OCI-LY7 (cell line): ENCODE measurements at regions of chr19 and their contacts with region 1.

Region 1: GRCh38 chr19:41449079-41449864 is 6.3 kb downstream of the ERICH4 start:
- DNase-seq: peak; percentile 71
- H3K4me3 ChIP-seq: peak overlapping the region; percentile 42
- H3K27ac ChIP-seq: no peak overlapping the region
- H3K4me1 ChIP-seq: peaks cover 23% of the 10 kb centered on the region
- CTCF ChIP-seq: peak; percentile 99

Region 2: DNA sequence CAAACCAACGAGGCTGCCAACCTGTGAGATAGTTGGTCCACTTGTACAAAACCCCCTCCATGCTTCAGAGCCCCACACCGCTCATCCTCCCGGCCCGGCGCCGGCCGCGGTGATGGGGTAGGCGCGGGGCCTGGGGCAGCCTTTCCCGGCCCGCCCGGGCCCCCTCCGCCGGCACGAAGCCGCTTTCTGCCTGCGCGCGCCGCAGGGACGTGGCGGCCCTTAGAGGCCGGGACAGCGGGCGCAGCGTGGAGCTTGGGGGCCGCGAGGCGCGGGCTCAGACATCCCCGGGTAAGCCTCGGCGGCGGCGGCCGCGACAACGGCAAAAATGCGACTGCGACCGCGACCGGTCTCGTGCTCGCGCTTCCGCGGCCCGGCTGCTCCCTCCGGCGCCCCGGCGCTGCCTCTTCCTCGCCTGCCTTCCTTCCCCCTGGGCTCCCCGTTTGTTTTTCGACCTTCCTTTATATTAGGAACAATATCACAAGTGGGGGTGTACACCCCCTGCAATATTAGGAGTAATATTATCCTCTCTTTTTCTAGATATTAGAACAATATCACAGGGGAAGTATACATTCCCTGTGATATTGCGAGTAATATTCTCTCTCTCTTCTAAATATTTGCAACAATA is 72.8 kb after region 1 on chr19:
- CTCF ChIA-PET with region 1: no interaction called
- POLR2A ChIA-PET with region 1: no interaction called
- intact Hi-C with region 1: loop called (anchors 2 kb)
- DNase-seq: no peak
- H3K4me3 ChIP-seq: peak overlapping the region; percentile 46
- H3K27ac ChIP-seq: no peak overlapping the region
- H3K4me1 ChIP-seq: peaks cover 28% of the 10 kb centered on the region
- CTCF ChIP-seq: no peak

Region 3: GRCh38 chr19:41541990-41542584 is 92.8 kb after region 1 on chr19:
- CTCF ChIA-PET with region 1: no interaction called
- POLR2A ChIA-PET with region 1: no interaction called
- intact Hi-C with region 1: loop called (anchors 1 kb)
- DNase-seq: peak; percentile 81
- H3K4me3 ChIP-seq: no peak overlapping the region
- H3K27ac ChIP-seq: no peak overlapping the region
- H3K4me1 ChIP-seq: peaks cover 64% of the 10 kb centered on the region
- CTCF ChIP-seq: peak; percentile 90

Region 4: DNA sequence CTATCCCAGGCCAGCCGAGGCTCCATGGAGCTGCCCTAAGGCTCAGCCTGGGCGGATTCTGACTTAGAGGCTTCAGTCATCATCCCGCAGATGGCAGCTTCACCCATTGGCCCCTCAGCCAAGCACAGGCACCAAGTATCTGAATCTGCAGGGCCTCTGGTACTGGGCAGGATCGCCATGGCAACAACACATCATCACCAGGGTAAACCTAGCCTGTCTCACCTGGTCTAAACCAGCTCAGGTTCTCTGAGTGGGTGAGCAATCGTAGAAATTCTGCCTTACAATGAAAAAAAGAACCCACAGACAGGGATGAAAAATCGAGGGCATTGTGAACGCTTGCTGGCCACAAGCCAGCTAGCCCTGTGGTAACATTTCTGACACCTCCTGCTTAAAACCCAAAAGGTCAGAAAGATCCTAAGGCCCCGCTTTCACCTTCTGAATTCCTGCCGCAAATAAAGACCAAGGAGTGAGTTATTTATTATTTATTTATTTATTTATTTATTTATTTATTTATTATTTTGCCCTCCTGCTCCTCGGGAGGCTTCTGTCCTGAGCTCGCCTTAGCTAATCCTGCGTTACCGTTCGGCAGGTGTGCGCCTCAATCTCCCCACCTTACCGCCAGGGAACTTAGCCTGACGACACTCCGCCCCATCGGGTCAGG is 114.7 kb after region 1 on chr19:
- CTCF ChIA-PET with region 1: interaction called, 5 read pairs
- POLR2A ChIA-PET with region 1: interaction called, 4 read pairs
- intact Hi-C with region 1: loop called (anchors 1 kb)
- DNase-seq: no peak
- H3K4me3 ChIP-seq: no peak overlapping the region
- H3K27ac ChIP-seq: no peak overlapping the region
- H3K4me1 ChIP-seq: peaks cover 37% of the 10 kb centered on the region
- CTCF ChIP-seq: no peak

Region 5: GRCh38 chr19:41570639-41571112 is 121.4 kb after region 1 on chr19:
- CTCF ChIA-PET with region 1: no interaction called
- POLR2A ChIA-PET with region 1: interaction called, 4 read pairs
- intact Hi-C with region 1: loop called (anchors 2 kb)
- DNase-seq: peak; percentile 87
- H3K4me3 ChIP-seq: no peak overlapping the region
- H3K27ac ChIP-seq: no peak overlapping the region
- H3K4me1 ChIP-seq: peaks cover 8% of the 10 kb centered on the region
- CTCF ChIP-seq: peak; percentile 98

Region 6: GRCh38 chr19:41597600-41598041 is 148.3 kb after region 1 on chr19:
- CTCF ChIA-PET with region 1: no interaction called
- POLR2A ChIA-PET with region 1: no interaction called
- intact Hi-C with region 1: loop called (anchors 1 kb)
- DNase-seq: peak; percentile 81
- H3K4me3 ChIP-seq: no peak overlapping the region
- H3K27ac ChIP-seq: no peak overlapping the region
- H3K4me1 ChIP-seq: peaks cover 10% of the 10 kb centered on the region
- CTCF ChIP-seq: peak; percentile 99

Region 7: GRCh38 chr19:41912899-41913537 is 463.7 kb after region 1 on chr19:
- CTCF ChIA-PET with region 1: no interaction called
- POLR2A ChIA-PET with region 1: no interaction called
- intact Hi-C with region 1: no loop called
- DNase-seq: no peak
- H3K4me3 ChIP-seq: no peak overlapping the region
- H3K27ac ChIP-seq: no peak overlapping the region
- H3K4me1 ChIP-seq: peaks cover 13% of the 10 kb centered on the region
- CTCF ChIP-seq: no peak